ENCODE measurements at regions of chr11 and their contacts with region 1.

Region 1: GRCh38 chr11:119236490-119236889 is 30.4 kb downstream of the CBL start:
- DNase-seq: no peak
- H3K4me3 ChIP-seq: no peak overlapping the region
- H3K27ac ChIP-seq: no peak overlapping the region
- H3K4me1 ChIP-seq: no peaks in the 10 kb centered on the region
- H3K27me3 ChIP-seq: no peaks in the 10 kb centered on the region
- CTCF ChIP-seq: no peak
- POLR2A ChIP-seq: no peak

Region 2: GRCh38 chr11:119249671-119250010 is 13.2 kb after region 1 on chr11:
- CTCF ChIA-PET with region 1: no interaction called
- POLR2A ChIA-PET with region 1: no interaction called
- dilution Hi-C with region 1: no loop called
- intact Hi-C with region 1: loop called (anchors 2 kb)
- DNase-seq: no peak
- H3K4me3 ChIP-seq: no peak overlapping the region
- H3K27ac ChIP-seq: no peak overlapping the region
- H3K4me1 ChIP-seq: peaks cover 3% of the 10 kb centered on the region
- H3K27me3 ChIP-seq: no peaks in the 10 kb centered on the region
- CTCF ChIP-seq: no peak
- POLR2A ChIP-seq: no peak

Region 3: DNA sequence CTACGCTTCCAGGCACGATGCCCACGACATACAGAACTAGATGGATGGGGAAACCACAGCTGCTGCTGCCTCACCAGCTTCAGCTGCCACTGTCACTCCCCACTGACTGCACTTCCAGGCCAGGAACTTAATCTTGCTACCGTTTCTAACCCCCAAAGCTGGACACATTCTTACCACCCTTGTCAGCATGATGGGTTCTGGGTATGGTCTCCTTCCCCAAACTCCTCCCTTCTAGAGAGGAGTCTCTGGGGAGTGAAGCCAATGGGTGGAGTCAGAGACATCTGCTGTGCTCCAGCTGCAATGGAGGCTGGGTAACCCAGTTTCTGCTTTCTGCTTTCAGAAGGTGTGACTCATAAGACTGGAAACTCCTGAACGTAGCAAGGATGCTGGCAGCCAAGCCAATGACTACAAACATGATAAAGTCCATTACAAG is 273.5 kb after region 1 on chr11:
- CTCF ChIA-PET with region 1: no interaction called
- POLR2A ChIA-PET with region 1: no interaction called
- dilution Hi-C with region 1: no loop called
- intact Hi-C with region 1: no loop called
- DNase-seq: no peak
- H3K4me3 ChIP-seq: no peak overlapping the region
- H3K27ac ChIP-seq: no peak overlapping the region
- H3K4me1 ChIP-seq: no peaks in the 10 kb centered on the region
- H3K27me3 ChIP-seq: peaks cover 0 to 2% of the 10 kb centered on the region in 2 experiments
- CTCF ChIP-seq: no peak
- POLR2A ChIP-seq: no peak

Region 4: GRCh38 chr11:119721129-119722120 is 484.9 kb after region 1 on chr11:
- CTCF ChIA-PET with region 1: no interaction called
- POLR2A ChIA-PET with region 1: no interaction called
- dilution Hi-C with region 1: no loop called
- intact Hi-C with region 1: no loop called
- DNase-seq: peak; percentile 45
- H3K4me3 ChIP-seq: no peak overlapping the region
- H3K27ac ChIP-seq: no peak overlapping the region
- H3K4me1 ChIP-seq: peaks cover 15% of the 10 kb centered on the region
- H3K27me3 ChIP-seq: no peaks in the 10 kb centered on the region
- CTCF ChIP-seq: peak; percentile 41
- POLR2A ChIP-seq: no peak